GM10248 (cell line): ENCODE measurements at regions of chr17 and their contacts with region 1.

Region 1: GRCh38 chr17:43946069-43946696 is 3.9 kb upstream of the PPY start:
- DNase-seq: no peak
- CTCF ChIP-seq: no peak

Region 2: GRCh38 chr17:43871951-43872695 is 74.1 kb before region 1 on chr17:
- CTCF ChIA-PET with region 1: no interaction called
- POLR2A ChIA-PET with region 1: no interaction called
- DNase-seq: no peak
- CTCF ChIP-seq: no peak

Region 3: DNA sequence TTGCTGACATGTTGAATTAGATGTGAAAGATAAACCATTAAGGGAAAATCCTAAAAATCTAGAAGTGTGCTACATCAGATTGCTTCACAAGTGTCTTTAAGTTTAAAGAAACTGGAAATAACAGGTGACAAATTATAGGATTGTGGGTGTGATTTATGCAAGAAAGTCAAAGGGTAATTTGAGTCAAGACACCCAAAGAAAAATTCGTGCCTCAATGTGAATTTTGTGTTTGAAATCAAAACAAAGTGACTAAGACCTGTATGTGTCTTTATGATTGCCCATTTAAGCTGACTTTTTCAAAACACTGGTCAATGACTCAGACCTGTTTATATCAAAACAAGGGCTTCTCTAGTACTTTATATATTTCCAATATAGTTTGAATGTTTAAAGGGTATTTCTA is 12.8 kb after region 1 on chr17:
- CTCF ChIA-PET with region 1: interaction called, 44 read pairs
- POLR2A ChIA-PET with region 1: no interaction called
- DNase-seq: no peak
- CTCF ChIP-seq: no peak

Region 4: DNA sequence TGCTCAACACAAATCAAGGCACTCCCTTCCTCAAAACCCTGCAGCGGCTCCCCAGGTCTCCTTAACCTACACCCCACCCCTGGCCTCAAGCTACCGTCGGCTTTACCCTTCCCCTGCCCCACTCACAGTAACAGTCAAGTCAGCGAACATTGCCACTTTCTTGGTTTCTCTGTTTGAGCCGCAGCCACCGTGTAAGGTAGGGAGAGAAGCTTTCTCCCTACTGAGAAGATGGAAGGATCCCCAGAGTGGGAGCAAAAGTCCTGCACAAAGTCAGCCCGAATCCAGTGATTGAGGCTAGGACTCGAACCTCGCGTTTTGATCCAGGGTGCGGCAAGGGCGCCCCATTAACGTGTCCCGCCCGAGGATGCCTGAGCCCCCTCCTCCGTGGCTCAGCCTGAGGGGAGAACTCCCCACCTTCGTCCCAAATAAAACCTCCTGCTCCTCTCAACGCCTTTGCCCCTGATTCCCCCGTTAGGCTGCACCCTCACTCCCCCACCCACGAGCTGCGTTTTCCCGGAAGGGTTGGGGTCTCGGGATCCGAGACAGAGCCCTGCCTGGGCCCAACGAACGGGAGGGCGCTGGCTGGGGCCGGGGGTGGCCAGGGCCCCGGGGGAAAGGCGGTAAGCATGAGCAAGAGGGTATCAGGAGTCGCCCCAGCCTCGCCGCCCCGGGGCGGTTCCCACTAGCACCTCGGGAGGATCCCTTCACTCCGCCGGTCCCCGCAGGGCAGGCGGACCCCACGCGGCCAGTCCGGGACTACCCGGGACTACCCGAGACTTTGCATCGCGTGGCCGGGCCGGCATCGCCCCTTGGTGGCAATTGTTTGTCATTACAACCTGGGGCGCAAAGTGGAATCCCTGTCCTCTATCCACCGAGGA is 48.3 kb after region 1 on chr17:
- CTCF ChIA-PET with region 1: interaction called, 67 read pairs
- POLR2A ChIA-PET with region 1: no interaction called
- DNase-seq: peak; percentile 76
- CTCF ChIP-seq: peak; percentile 82

Region 5: GRCh38 chr17:44014437-44015172 is 68.4 kb after region 1 on chr17 and contains the start of gene TMEM101:
- CTCF ChIA-PET with region 1: no interaction called
- POLR2A ChIA-PET with region 1: no interaction called
- DNase-seq: peak; percentile 96
- CTCF ChIP-seq: no peak

Region 6: GRCh38 chr17:44044067-44044466 is 97.9 kb after region 1 on chr17:
- CTCF ChIA-PET with region 1: interaction called, 57 read pairs
- POLR2A ChIA-PET with region 1: no interaction called
- DNase-seq: no peak
- CTCF ChIP-seq: no peak

Region 7: DNA sequence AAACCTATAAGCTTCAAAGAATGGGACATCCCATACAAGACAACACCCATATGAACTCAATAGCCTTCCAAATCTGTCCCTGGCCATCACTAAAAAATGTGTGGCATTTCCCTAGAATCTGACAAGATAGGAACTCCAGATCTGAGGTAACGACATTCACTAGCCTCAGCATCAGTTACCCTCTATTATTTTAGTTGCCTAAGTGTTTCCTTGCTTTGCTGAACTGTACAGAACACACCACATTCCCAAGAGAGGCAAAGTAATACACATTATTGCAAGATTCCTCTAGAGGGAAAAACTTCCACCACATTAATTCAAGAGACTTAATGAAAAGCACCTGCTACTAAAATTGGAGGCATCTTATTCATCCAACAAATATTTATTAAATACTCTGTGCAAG is 115.3 kb after region 1 on chr17:
- CTCF ChIA-PET with region 1: no interaction called
- POLR2A ChIA-PET with region 1: no interaction called
- DNase-seq: no peak
- CTCF ChIP-seq: no peak